ENCODE measurements at regions of chr12 and their contacts with region 1.

Region 1: GRCh38 chr12:111451649-111452129 is 46.0 kb downstream of the SH2B3 start:
- DNase-seq: peak; percentile 80
- ATAC-seq: peak; percentile 64
- H3K4me3 ChIP-seq: no peak overlapping the region
- H3K4me3 Mint-ChIP-seq: no peak overlapping the region
- H3K27ac ChIP-seq: peak overlapping the region in 1 of 2 donors; percentile 37
- H3K27ac Mint-ChIP-seq: peak overlapping the region; percentile 17
- H3K4me1 ChIP-seq: peaks cover 0 to 24% of the 10 kb centered on the region in 2 donors
- H3K4me1 Mint-ChIP-seq: peaks cover 29% of the 10 kb centered on the region
- H3K27me3 ChIP-seq: no peaks in the 10 kb centered on the region
- H3K27me3 Mint-ChIP-seq: no peaks in the 10 kb centered on the region
- CTCF ChIP-seq: peak; percentile 89

Region 2: DNA sequence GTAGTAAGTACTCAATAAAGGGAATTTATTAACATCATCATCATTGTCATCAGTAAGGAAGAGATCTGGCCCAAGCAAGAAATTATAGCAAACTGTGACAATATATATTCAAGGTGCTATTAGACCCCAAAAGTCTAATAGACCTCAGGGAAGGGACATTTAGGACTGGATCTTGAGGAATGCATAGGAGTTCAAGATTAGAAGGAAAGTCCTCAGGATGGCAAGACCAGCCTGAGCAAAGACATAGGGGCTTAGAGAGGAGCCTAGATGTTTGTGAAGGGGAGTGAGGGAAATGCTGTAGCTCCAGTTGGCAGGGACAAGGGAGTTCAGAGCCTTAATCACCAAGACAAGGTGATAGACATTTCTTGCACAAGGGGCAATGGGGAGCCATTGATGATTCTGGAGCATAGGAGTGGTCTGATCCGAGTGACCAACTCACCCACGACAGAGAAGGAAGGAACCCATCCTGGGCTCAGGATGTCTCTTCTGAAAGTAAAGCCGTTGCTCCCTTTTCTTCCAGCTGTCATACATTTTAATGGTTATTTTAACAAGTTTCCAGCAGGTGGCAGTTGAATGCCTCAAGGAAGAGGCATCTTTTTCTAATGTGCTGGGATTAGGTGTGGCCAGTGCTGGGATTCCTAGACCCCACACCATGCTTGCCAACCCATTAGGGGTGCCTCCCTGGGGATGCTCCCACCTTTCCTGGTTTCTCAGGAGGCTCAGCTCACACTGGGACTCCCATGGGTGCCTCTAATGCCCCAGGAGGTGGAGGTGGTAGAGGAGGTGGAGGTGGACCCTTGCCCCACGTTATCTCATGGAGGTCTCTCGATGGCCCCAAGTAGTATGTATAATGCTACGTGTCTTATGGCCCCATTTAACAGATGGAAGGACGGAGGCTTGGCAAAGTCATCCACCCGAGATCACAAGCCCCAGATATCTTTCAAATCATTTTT is 120.6 kb before region 1 on chr12:
- CTCF ChIA-PET with region 1: interaction called, 29 read pairs
- POLR2A ChIA-PET with region 1: no interaction called
- intact Hi-C with region 1: loop called (anchors 1 kb)
- DNase-seq: peak; percentile 57
- ATAC-seq: peak; percentile 45
- H3K4me3 ChIP-seq: no peak overlapping the region
- H3K4me3 Mint-ChIP-seq: no peak overlapping the region
- H3K27ac ChIP-seq: no peak overlapping the region
- H3K27ac Mint-ChIP-seq: no peak overlapping the region
- H3K4me1 ChIP-seq: peaks cover 0 to 4% of the 10 kb centered on the region in 2 donors
- H3K4me1 Mint-ChIP-seq: no peaks in the 10 kb centered on the region
- H3K27me3 ChIP-seq: peaks cover 0 to 5% (median 0%) of the 10 kb centered on the region in 4 experiments
- H3K27me3 Mint-ChIP-seq: peaks cover 8% of the 10 kb centered on the region
- CTCF ChIP-seq: peak; percentile 59

Region 3: GRCh38 chr12:111396726-111397445 is 54.8 kb before region 1 on chr12:
- CTCF ChIA-PET with region 1: interaction called, 1,472 read pairs
- POLR2A ChIA-PET with region 1: interaction called, 4 read pairs
- intact Hi-C with region 1: loop called (anchors 1 kb)
- DNase-seq: peak; percentile 91
- ATAC-seq: peak; percentile 91
- H3K4me3 ChIP-seq: peak overlapping the region in 4 of 5 experiments; percentile 22 to 56 (median 44)
- H3K4me3 Mint-ChIP-seq: peak overlapping the region; percentile 86
- H3K27ac ChIP-seq: no peak overlapping the region
- H3K27ac Mint-ChIP-seq: peak overlapping the region; percentile 63
- H3K4me1 ChIP-seq: peaks cover 6 to 24% of the 10 kb centered on the region in 2 donors
- H3K4me1 Mint-ChIP-seq: peaks cover 28% of the 10 kb centered on the region
- H3K27me3 ChIP-seq: no peaks in the 10 kb centered on the region
- H3K27me3 Mint-ChIP-seq: no peaks in the 10 kb centered on the region
- CTCF ChIP-seq: peak; percentile 99

Region 4: GRCh38 chr12:111417784-111418593 is 33.7 kb before region 1 on chr12:
- CTCF ChIA-PET with region 1: interaction called, 1,472 read pairs
- POLR2A ChIA-PET with region 1: interaction called, 3 read pairs
- intact Hi-C with region 1: no loop called
- DNase-seq: no peak
- ATAC-seq: no peak
- H3K4me3 ChIP-seq: no peak overlapping the region
- H3K4me3 Mint-ChIP-seq: no peak overlapping the region
- H3K27ac ChIP-seq: no peak overlapping the region
- H3K27ac Mint-ChIP-seq: no peak overlapping the region
- H3K4me1 ChIP-seq: peaks cover 6 to 14% of the 10 kb centered on the region in 2 donors
- H3K4me1 Mint-ChIP-seq: peaks cover 37% of the 10 kb centered on the region
- H3K27me3 ChIP-seq: no peaks in the 10 kb centered on the region
- H3K27me3 Mint-ChIP-seq: no peaks in the 10 kb centered on the region
- CTCF ChIP-seq: no peak

Region 5: DNA sequence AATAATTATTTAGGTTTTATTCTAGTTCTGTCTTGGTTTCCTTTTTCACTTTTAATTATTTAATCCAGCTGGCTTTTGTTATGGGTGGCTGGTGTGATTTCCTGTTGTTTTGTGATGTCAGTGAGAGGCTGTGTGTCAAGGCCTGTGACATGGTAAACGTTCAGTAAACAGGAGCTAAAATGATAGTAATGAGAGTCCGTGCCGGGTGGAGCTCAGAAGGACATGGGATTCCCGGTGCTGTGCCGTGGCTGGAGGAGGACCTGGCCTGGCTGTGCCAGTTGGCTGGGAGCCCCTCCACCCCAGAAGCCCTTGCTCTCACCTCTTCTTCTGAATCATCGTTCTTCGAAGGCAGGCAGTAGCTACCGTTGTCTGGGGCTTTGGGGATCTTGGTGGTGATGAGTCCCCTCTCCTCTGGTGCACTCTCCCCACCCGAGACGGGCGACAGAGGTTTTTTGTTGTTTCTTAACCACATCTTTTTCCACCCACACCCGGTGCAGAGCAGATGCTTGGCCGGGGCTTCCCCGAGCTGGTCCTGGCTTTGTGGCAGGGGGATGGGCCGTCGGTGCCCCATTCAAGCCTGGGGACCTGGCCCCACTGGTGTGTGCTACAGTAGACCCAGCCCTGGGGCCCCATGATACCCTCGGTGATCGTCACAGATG is 16.9 kb before region 1 on chr12:
- CTCF ChIA-PET with region 1: interaction called, 63 read pairs
- POLR2A ChIA-PET with region 1: interaction called, 5 read pairs
- intact Hi-C with region 1: loop called (anchors 2 kb)
- DNase-seq: peak; percentile 92
- ATAC-seq: peak; percentile 76
- H3K4me3 ChIP-seq: peak overlapping the region; percentile 5 to 65 (median 43)
- H3K4me3 Mint-ChIP-seq: peak overlapping the region; percentile 92
- H3K27ac ChIP-seq: peak overlapping the region; percentile 96 to 97
- H3K27ac Mint-ChIP-seq: peak overlapping the region; percentile 99
- H3K4me1 ChIP-seq: peaks cover 88 to 98% of the 10 kb centered on the region in 2 donors
- H3K4me1 Mint-ChIP-seq: peaks cover 90% of the 10 kb centered on the region
- H3K27me3 ChIP-seq: no peaks in the 10 kb centered on the region
- H3K27me3 Mint-ChIP-seq: no peaks in the 10 kb centered on the region
- CTCF ChIP-seq: no peak

Region 6: DNA sequence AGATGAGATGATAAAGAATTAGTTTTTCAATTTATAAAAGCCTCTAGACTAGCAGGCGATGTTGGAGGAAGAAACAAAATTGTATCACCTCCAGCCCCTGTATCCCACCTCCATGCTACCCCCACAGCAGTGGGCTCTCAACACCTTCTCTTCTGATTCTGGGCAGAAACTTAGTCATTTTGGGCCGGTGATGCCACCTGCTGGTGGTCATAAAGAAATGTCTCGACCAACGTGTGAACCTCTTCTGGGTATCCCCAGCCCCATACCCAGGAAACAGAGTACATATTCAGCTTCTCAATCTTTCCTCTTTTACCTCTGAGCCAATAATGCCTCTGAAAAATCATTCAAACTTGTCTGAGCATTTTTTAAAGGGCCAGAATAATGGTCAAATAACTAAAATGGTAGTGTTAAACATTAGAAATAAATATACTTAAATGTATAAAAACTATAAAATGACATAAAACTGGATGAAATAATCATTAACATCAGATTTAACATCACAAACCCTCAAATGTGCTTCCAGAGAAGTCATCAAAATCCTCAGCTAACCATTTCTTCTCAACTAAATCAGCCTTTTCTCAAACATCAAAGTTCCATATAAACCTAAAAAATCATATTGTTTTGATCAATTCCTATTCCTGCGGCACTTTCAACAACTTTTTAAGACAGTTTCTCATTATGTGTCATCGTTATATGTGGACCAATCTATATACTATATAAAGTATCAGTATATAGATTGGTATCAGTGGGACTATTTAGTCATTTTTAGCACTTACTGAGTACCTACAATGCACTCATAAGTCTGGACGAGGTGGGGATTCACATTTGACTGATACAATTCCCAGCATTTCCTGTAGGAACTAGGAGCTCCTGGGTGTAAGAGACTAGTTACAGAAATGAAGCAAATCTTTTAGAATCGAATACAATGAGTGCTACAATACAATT is 78.0 kb after region 1 on chr12:
- CTCF ChIA-PET with region 1: interaction called, 28 read pairs
- POLR2A ChIA-PET with region 1: no interaction called
- intact Hi-C with region 1: loop called (anchors 1 kb)
- DNase-seq: peak; percentile 78
- ATAC-seq: peak; percentile 76
- H3K4me3 ChIP-seq: no peak overlapping the region
- H3K4me3 Mint-ChIP-seq: no peak overlapping the region
- H3K27ac ChIP-seq: no peak overlapping the region
- H3K27ac Mint-ChIP-seq: no peak overlapping the region
- H3K4me1 ChIP-seq: no peaks in the 10 kb centered on the region
- H3K4me1 Mint-ChIP-seq: no peaks in the 10 kb centered on the region
- H3K27me3 ChIP-seq: no peaks in the 10 kb centered on the region
- H3K27me3 Mint-ChIP-seq: no peaks in the 10 kb centered on the region
- CTCF ChIP-seq: peak; percentile 85